HEK293T (cell line): ENCODE measurements at regions of chr16 and their contacts with region 1.

Region 1: DNA sequence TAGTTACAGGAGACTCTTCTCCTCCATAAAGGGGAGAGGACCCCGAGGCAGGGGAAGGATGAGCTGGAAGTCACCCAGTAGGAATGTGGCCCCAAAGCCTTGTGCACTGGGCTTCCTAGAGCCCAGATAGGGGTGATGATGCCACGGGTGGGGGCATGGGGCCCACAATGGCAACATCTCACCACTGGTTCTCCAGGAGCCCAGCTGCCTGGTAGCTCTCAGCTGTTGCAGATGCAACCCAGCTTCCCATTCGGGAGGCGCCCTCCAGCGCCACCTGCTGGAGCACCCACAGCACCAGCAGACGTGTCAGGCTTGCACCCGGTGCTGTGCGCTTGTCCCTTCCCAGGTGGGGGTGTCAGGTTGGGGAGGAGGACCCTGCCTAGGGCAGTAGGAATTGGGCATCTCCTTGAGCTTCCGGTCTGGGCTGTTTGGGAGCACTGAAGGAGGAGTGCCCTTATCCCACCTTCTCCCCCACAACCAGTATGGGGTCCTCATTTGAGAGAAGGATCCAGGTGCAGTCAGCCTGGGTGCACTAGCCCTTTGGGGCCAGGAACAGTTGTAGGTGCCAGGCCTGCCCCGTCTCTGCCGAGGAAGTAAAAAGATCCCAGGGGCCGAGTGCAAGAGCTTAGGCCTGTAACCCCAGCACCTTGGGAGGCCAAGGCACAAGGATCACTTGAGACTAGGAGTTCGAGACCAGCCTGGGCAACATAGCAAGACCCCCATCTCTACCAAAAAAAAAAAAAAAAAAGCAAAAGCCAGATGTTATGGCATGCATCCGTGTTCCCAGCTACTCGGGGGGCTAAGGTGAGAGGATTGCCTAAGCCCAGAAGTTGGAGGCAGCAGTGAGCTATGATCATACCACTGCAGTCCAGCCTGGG is 14.4 kb downstream of the CDIPT start:
- DNase-seq: peak; percentile 93

Region 2: DNA sequence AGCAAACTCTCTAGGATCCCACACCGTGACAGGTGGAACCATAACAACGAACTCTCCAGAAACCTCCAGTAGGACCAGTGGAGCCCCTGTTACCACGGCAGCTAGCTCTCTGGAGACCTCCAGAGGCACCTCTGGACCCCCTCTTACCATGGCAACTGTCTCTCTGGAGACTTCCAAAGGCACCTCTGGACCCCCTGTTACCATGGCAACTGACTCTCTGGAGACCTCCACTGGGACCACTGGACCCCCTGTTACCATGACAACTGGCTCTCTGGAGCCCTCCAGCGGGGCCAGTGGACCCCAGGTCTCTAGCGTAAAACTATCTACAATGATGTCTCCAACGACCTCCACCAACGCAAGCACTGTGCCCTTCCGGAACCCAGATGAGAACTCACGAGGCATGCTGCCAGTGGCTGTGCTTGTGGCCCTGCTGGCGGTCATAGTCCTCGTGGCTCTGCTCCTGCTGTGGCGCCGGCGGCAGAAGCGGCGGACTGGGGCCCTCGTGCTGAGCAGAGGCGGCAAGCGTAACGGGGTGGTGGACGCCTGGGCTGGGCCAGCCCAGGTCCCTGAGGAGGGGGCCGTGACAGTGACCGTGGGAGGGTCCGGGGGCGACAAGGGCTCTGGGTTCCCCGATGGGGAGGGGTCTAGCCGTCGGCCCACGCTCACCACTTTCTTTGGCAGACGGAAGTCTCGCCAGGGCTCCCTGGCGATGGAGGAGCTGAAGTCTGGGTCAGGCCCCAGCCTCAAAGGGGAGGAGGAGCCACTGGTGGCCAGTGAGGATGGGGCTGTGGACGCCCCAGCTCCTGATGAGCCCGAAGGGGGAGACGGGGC is 184.4 kb before region 1 on chr16:
- CTCF ChIA-PET with region 1: no interaction called
- POLR2A ChIA-PET with region 1: no interaction called
- DNase-seq: no peak

Region 3: GRCh38 chr16:29700253-29700987 is 148.2 kb before region 1 on chr16:
- CTCF ChIA-PET with region 1: interaction called, 10 read pairs
- POLR2A ChIA-PET with region 1: interaction called, 3 read pairs
- DNase-seq: peak; percentile 87

Region 4: GRCh38 chr16:29784157-29784556 is 64.5 kb before region 1 on chr16:
- CTCF ChIA-PET with region 1: no interaction called
- POLR2A ChIA-PET with region 1: no interaction called
- DNase-seq: no peak

Region 5: GRCh38 chr16:29815793-29816693 is 32.6 kb before region 1 on chr16 and contains the start of gene PAGR1:
- CTCF ChIA-PET with region 1: interaction called, 52 read pairs
- POLR2A ChIA-PET with region 1: interaction called, 32 read pairs
- DNase-seq: peak; percentile 99

Region 6: GRCh38 chr16:29825145-29826044 is 23.3 kb before region 1 on chr16:
- CTCF ChIA-PET with region 1: interaction called, 53 read pairs
- POLR2A ChIA-PET with region 1: interaction called, 5 read pairs
- DNase-seq: no peak

Region 7: DNA sequence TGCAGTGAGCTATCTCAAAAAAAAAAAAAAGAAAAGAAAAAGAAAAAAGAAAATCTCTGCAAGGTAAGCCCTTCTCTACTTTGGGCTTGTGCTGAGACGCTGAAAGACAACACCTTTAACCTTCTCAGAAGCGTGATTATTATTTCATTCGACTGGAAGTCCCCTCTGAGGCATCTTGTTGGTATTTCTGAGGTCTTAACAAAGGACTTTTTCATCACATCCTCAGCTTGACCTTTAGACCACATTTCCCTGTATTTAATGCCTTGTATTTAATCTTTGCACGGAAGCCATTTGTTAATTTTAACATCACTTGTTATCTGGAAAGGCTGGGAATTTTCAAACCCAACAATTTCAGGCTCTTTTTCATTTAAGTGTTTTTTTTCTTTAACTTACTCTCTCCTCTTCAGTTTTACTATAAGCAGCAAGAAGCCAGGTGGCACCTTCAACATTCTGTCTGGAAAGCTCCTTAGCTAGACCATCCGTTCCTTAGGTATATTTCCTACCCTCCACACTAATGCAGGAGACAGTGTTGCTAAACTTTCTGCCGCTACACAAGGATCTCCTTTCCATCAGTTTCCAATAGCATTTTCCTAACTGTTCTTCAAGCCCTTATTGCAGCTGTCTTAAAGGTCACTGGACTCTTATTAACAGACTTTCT is 67.1 kb after region 1 on chr16:
- CTCF ChIA-PET with region 1: no interaction called
- POLR2A ChIA-PET with region 1: no interaction called
- DNase-seq: no peak